ENCODE measurements at regions of chr21 and their contacts with region 1.

Region 1: GRCh38 chr21:27700974-27701614 is 734.2 kb upstream of the ADAMTS5 start:
- DNase-seq: peak; percentile 77
- ATAC-seq: peak; percentile 82 to 91
- H3K4me3 ChIP-seq: no peak overlapping the region
- H3K27ac ChIP-seq: no peak overlapping the region
- H3K4me1 ChIP-seq: peaks cover 6% of the 10 kb centered on the region
- H3K27me3 ChIP-seq: no peaks in the 10 kb centered on the region
- CTCF ChIP-seq: peak; percentile 79

Region 2: DNA sequence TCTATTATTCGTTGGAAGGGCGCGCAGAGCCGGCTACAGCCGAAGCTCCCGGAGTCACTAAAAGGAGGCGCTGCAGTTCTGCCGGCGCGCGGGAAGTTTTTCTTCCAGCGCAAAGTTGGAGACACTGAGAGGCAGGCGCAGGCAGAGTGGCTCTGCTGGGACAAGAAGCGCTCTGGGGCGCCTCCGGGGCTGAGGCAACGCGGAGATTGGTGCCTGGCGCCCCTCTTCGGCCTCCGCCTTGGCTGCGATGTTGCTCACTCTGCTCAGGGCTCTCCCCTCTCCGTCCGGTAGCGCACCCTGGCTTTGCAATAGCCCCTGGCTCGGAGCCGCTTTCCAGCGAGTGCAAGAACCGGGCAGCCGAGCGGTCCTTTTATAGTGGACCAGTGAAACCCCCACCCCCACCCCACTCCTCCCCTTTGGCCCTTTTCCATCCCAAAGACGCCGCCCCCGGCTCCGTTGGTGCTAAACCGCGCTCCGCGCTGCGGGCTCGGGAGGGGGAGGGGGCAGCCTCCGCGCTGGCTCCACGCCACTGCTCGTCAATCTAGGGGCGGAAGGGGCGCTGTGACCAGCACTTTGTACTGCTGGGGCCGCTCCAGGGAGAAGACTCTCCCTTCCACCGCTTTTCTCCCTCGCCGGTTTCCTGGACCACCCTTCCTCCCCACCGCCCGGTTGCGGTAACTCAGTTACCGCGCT is 855.9 kb before region 1 on chr21 and contains the start of gene ADAMTS1:
- intact Hi-C with region 1: loop called (anchors 5 kb)
- DNase-seq: peak; percentile 82
- ATAC-seq: peak; percentile 76 to 77
- H3K4me3 ChIP-seq: peak within 1 kb of the TSS; percentile 79
- H3K27ac ChIP-seq: peak within 1 kb of the TSS; percentile 95
- H3K4me1 ChIP-seq: peaks cover 65% of the 10 kb centered on the region
- H3K27me3 ChIP-seq: peaks cover 23% of the 10 kb centered on the region
- CTCF ChIP-seq: no peak
- total RNA-seq, gene ADAMTS1: 59.3 TPM